ENCODE measurements at regions of chr7 and their contacts with region 1.

Region 1: GRCh38 chr7:147245292-147245691 is 1128.7 kb downstream of the CNTNAP2 start:
- DNase-seq: peak in 1 of 3 donors; percentile 5
- H3K4me3 ChIP-seq: no peak overlapping the region
- H3K4me3 Mint-ChIP-seq: no peak overlapping the region
- H3K27ac ChIP-seq: no peak overlapping the region
- H3K27ac Mint-ChIP-seq: no peak overlapping the region
- H3K4me1 ChIP-seq: no peaks in the 10 kb centered on the region
- H3K4me1 Mint-ChIP-seq: no peaks in the 10 kb centered on the region
- H3K27me3 ChIP-seq: no peaks in the 10 kb centered on the region
- H3K27me3 Mint-ChIP-seq: peaks cover 0 to 2% (median 2%) of the 10 kb centered on the region in 3 donors
- CTCF ChIP-seq: peak; percentile 44

Region 2: GRCh38 chr7:148084138-148084537 is 838.8 kb after region 1 on chr7:
- intact Hi-C with region 1: loop called in 1 of 2 experiments (anchors 10 kb)
- DNase-seq: no peak
- H3K4me3 ChIP-seq: no peak overlapping the region
- H3K4me3 Mint-ChIP-seq: no peak overlapping the region
- H3K27ac ChIP-seq: no peak overlapping the region
- H3K27ac Mint-ChIP-seq: no peak overlapping the region
- H3K4me1 ChIP-seq: no peaks in the 10 kb centered on the region
- H3K4me1 Mint-ChIP-seq: no peaks in the 10 kb centered on the region
- H3K27me3 ChIP-seq: no peaks in the 10 kb centered on the region
- H3K27me3 Mint-ChIP-seq: peaks cover 0 to 2% (median 0%) of the 10 kb centered on the region in 3 donors
- CTCF ChIP-seq: peak; percentile 33